ENCODE measurements at regions of chr17 and their contacts with region 1.

Region 1: GRCh38 chr17:78736526-78737079 is 45.5 kb downstream of the CYTH1 start:
- DNase-seq: peak; percentile 74
- ATAC-seq: peak; percentile 71
- H3K4me3 Mint-ChIP-seq: peak overlapping the region; percentile 95
- H3K27ac Mint-ChIP-seq: peak overlapping the region; percentile 99
- H3K4me1 Mint-ChIP-seq: peaks cover 92% of the 10 kb centered on the region
- H3K27me3 Mint-ChIP-seq: no peaks in the 10 kb centered on the region
- CTCF ChIP-seq: no peak

Region 2: DNA sequence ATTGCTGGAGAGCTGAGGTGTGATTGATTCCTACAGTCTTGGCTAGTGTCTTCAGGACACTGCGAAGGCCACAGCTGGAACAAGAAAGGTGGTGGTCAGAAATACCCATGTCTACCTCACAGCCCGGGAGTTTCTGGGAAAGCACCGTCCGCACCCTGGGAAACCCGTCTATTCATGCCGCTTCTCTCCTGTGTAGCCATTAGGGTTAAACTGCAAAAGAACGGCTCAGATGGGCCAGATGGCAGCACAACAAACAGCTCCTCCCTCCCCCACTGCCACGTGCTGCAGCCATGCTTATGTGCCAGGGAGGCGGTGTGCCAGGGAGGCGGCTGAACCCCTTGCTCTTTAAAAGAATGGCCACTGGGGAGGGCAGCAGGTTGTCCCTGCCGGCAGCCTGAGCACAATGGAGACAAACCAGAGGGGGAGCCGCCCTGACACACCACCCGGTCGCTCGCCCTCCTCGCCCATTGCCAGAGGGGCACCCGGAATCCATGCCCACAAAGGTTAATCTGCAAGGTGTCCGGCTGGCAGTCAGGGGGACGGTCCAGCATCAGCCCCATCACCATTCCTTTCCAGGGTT is 19.7 kb before region 1 on chr17:
- CTCF ChIA-PET with region 1: interaction called, 55 read pairs
- POLR2A ChIA-PET with region 1: interaction called, 27 read pairs
- intact Hi-C with region 1: no loop called
- DNase-seq: peak; percentile 61
- ATAC-seq: no peak
- H3K4me3 Mint-ChIP-seq: peak overlapping the region; percentile 61
- H3K27ac Mint-ChIP-seq: peak overlapping the region; percentile 89
- H3K4me1 Mint-ChIP-seq: peaks cover 87% of the 10 kb centered on the region
- H3K27me3 Mint-ChIP-seq: no peaks in the 10 kb centered on the region
- CTCF ChIP-seq: no peak

Measured in activated CD8-positive, alpha-beta T cell treated with anti-CD3 and anti-CD28 coated beads for 36 hours (primary cell).